ENCODE measurements at regions of chr10 and their contacts with region 1.

Region 1: GRCh38 chr10:71748671-71749191 is 24.6 kb downstream of the VSIR start:
- DNase-seq: peak; percentile 89
- ATAC-seq: peak; percentile 88
- H3K4me3 Mint-ChIP-seq: peak overlapping the region; percentile 59
- H3K27ac Mint-ChIP-seq: peak overlapping the region; percentile 98
- H3K4me1 Mint-ChIP-seq: peaks cover 96% of the 10 kb centered on the region
- H3K27me3 Mint-ChIP-seq: no peaks in the 10 kb centered on the region
- CTCF ChIP-seq: no peak

Region 2: DNA sequence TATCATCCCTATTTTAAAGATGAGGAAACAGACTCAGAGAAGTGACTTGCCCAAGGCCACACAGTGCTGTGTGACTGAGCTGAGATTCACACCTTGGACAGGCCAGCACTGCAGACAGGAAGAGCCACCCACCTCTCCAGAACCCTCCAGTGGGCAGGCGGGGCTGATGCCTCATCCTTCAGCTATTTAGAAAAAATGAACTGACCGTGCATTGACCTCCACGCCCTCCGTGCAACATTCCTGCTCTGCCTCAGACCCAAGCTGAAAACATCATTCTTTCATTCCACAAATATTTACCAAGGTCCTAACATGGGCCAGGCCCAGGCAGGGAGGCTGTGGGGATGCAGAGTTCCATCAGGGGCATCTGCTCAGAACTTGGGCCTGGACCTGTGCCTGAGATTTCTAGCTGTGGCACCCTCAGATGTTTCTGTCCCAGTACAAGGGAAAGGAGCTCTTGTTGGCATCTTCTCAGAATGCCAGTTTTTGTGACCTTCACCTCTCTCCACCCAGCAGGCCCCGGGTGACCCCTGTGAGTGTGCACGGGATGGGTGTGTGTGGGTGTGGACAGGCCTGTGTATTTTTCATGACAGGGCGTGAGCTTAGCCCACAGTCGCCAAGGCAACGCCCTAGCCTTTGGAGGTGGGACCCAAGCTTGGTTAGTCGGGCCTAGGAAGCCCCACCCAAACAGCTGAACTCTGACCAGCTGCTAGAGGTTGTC is 18.1 kb after region 1 on chr10:
- CTCF ChIA-PET with region 1: interaction called, 17 read pairs
- POLR2A ChIA-PET with region 1: interaction called, 92 read pairs
- intact Hi-C with region 1: no loop called
- DNase-seq: peak; percentile 72
- ATAC-seq: peak; percentile 6
- H3K4me3 Mint-ChIP-seq: peak overlapping the region; percentile 32
- H3K27ac Mint-ChIP-seq: peak overlapping the region; percentile 95
- H3K4me1 Mint-ChIP-seq: peaks cover 88% of the 10 kb centered on the region
- H3K27me3 Mint-ChIP-seq: no peaks in the 10 kb centered on the region
- CTCF ChIP-seq: no peak

Measured in activated CD8-positive, alpha-beta T cell treated with anti-CD3 and anti-CD28 coated beads for 36 hours (primary cell).